ENCODE measurements at regions of chr1 and their contacts with region 1.

Region 1: GRCh38 chr1:25608488-25609178 is 8.0 kb upstream of the MAN1C1 start:
- DNase-seq: peak; percentile 86 to 92 (median 88)
- ATAC-seq: peak; percentile 74 to 96 (median 90)
- H3K4me3 ChIP-seq: peak overlapping the region in 7 of 12 donors; percentile 13 to 34 (median 29)
- H3K27ac ChIP-seq: peak overlapping the region in 1 of 12 donors; percentile 32
- H3K4me1 ChIP-seq: peaks cover 0 to 11% (median 0%) of the 10 kb centered on the region in 12 donors
- H3K27me3 ChIP-seq: no peaks in the 10 kb centered on the region
- CTCF ChIP-seq: peak; percentile 58 to 90 (median 79)
- POLR2A ChIP-seq: no peak

Region 2: DNA sequence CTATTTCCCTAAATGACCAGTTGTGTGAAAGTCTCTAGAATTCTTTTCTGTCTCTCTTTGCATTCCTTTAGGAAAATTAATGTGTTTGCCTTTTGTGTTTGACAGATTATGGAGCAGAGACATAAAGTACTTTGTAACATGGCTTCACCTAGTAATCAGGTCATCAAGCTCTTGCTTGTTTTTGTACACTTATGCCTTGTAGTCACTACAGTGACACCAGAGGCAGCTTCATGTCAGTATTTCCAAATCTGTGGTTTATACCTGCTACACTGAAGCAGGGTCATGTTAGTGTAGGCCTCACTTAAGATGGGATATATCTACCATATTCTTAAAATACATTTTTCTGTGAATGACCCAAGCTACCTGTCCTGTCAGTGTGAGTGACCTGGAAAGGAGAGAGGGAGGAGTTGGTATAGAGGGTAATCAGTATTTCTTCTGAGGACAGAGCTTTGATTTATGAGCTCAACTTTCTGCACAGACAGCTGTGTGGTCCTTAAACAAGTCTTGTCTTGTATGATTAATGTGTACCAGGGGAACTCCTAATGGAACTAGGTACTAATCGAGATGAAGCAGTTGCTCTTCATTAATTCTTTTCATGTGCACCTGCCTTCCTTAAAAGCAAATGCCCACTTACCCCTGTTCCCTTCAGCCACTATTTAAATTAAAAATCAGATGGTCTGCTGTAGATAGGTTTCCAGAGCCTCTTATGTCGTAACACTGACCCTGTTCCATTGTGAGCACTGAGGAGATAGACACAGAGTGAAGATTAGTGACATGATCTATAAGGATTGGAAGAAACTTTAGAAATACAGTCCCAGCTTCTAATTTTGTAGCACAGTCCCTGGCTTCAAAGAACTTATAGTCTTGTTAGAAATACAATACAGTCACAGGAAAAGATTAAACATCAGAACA is 132.2 kb before region 1 on chr1:
- intact Hi-C with region 1: no loop called
- DNase-seq: no peak
- ATAC-seq: no peak
- H3K4me3 ChIP-seq: no peak overlapping the region
- H3K27ac ChIP-seq: no peak overlapping the region
- H3K4me1 ChIP-seq: peaks cover 0 to 46% (median 21%) of the 10 kb centered on the region in 12 donors
- H3K27me3 ChIP-seq: no peaks in the 10 kb centered on the region
- CTCF ChIP-seq: no peak
- POLR2A ChIP-seq: no peak

Region 3: DNA sequence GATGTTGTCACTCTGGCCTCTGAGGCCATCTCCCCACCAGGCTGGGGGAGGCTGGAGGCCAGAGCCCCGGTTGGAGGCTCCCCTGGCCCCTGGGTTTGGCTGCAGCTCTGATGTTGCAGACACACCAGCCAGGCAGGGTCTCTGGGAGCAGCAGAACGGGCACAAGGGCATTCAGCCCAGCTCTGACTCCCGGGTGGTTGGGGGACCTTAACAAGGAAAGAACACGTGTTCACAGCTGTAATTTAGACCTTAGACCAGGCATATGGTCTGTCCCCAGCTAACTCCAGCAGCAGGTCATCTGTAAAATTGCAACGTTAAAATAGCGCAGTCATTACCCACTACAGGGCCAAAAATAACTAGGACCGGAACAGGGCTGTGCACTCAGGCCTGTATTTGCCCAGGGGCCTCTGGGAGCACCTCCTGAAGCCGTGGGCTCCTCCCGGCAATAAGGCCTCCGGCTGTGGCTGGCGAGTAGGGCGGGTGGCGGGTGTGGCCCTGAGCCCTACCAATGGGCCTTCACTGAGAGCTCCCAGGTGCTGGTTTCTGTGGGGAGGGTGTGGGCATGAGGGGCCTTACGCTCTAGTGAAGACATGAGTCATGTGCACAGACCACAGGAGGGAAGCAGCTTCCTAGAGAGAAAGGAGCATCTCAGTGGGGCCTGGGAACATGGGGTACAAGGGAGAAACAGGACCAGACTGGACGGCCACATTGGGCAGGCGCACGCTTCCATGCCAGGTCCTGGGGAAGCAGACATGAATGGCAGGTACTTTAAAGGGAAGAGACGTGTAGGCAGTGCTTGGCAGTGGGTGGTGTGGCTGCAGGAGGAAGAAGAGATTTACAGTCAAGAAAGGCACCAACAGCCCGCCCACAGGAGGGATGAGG is 59.1 kb before region 1 on chr1:
- intact Hi-C with region 1: loop called in 2 of 10 experiments (anchors 5 kb)
- DNase-seq: peak; percentile 54 to 74 (median 60)
- ATAC-seq: peak; percentile 50 to 85 (median 82)
- H3K4me3 ChIP-seq: peak overlapping the region in 2 of 12 donors; percentile 0 to 11
- H3K27ac ChIP-seq: peak overlapping the region in 11 of 12 donors; percentile 62 to 95 (median 76)
- H3K4me1 ChIP-seq: peaks cover 11 to 97% (median 78%) of the 10 kb centered on the region in 12 donors
- H3K27me3 ChIP-seq: no peaks in the 10 kb centered on the region
- CTCF ChIP-seq: no peak
- POLR2A ChIP-seq: no peak

Region 4: GRCh38 chr1:25688390-25689161 is 79.9 kb after region 1 on chr1:
- intact Hi-C with region 1: loop called in 1 of 10 experiments (anchors 5 kb)
- DNase-seq: peak in 1 of 5 donors; percentile 55
- ATAC-seq: peak in 3 of 4 donors; percentile 45 to 79 (median 74)
- H3K4me3 ChIP-seq: no peak overlapping the region
- H3K27ac ChIP-seq: peak overlapping the region in 11 of 12 donors; percentile 11 to 69 (median 50)
- H3K4me1 ChIP-seq: peaks cover 0 to 46% (median 19%) of the 10 kb centered on the region in 12 donors
- H3K27me3 ChIP-seq: no peaks in the 10 kb centered on the region
- CTCF ChIP-seq: no peak
- POLR2A ChIP-seq: no peak

Region 5: DNA sequence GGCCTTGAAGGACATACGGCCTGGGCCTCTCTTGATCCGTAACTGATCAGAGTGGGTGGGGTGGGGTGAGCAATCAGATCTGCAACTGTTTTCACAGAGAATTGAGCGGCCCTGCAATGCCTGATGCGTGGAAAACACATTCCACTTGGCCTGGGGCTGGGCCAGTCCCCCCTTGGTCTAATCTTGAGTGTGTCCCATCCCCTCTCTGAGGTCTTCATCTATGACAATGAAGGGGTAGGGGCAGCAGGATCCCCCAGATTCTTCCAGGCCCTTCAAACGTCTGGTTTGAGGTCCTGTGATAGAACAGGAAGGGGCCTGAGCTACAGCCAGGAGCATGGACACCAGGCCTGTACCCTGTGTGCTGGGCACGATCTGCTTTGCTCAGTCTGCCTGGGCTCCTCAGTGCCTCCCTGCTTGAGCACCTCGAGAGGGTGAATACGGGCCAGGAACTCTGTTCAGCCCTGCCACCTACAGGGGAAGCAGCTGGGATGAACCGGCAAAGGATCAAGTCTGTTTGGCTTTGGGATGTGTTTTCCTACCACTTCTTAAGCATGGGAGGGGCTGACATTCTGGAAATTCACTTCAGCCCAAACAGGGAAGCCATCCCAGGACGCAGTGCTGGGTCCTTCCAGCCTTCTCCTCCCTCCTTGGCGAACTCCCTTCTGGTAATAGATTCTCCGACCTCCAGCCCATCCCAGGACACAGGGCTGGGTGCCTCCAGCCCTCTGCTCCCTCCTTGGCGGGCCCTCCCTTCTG is 135.4 kb after region 1 on chr1:
- intact Hi-C with region 1: loop called in 2 of 10 experiments (anchors 2 kb)
- DNase-seq: peak; percentile 76 to 88 (median 79)
- ATAC-seq: peak; percentile 86 to 91 (median 88)
- H3K4me3 ChIP-seq: no peak overlapping the region
- H3K27ac ChIP-seq: peak overlapping the region; percentile 81 to 99 (median 92)
- H3K4me1 ChIP-seq: peaks cover 0 to 39% (median 28%) of the 10 kb centered on the region in 12 donors
- H3K27me3 ChIP-seq: no peaks in the 10 kb centered on the region
- CTCF ChIP-seq: peak; percentile 27 to 73 (median 53)
- POLR2A ChIP-seq: no peak

Region 6: GRCh38 chr1:25810341-25811299 is 202.0 kb after region 1 on chr1:
- intact Hi-C with region 1: loop called in 3 of 10 experiments (anchors 5 kb)
- DNase-seq: peak; percentile 61 to 87 (median 73)
- ATAC-seq: peak; percentile 27 to 63 (median 46)
- H3K4me3 ChIP-seq: no peak overlapping the region
- H3K27ac ChIP-seq: peak overlapping the region in 1 of 12 donors; percentile 6
- H3K4me1 ChIP-seq: peaks cover 0 to 45% (median 32%) of the 10 kb centered on the region in 12 donors
- H3K27me3 ChIP-seq: no peaks in the 10 kb centered on the region
- CTCF ChIP-seq: peak; percentile 84 to 94 (median 89)
- POLR2A ChIP-seq: no peak

Measured in heart left ventricle (tissue), 16 donors.